ENCODE measurements at regions of chrX and their contacts with region 1.

Region 1: DNA sequence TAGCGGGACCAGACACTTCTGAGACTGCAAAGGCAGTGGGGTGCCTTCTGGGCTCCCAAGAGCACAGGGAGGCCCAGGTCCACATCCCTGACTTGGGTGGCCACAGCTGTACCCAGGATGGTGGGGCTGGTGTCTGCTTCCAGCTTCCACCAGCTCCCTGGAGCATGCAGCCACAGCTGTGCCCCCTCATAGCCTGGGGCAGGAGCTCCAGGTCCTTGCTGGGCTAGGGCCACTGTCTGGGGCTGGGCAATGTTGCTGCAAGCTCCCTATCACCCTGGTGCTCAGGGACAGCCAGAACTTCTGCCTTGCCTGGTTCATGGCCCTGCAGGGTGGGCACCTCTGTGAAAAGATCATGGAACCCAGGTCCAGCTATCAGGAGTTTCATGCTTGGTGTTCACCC is 673.9 kb downstream of the SH3BGRL start:
- DNase-seq: no peak
- H3K4me3 ChIP-seq: no peak overlapping the region
- H3K27ac ChIP-seq: no peak overlapping the region
- H3K4me1 ChIP-seq: no peaks in the 10 kb centered on the region
- H3K27me3 ChIP-seq: no peaks in the 10 kb centered on the region
- CTCF ChIP-seq: no peak
- EP300 ChIP-seq: no peak
- POLR2A ChIP-seq: no peak

Region 2: GRCh38 chrX:82384401-82384800 is 508.6 kb after region 1 on chrX:
- in situ Hi-C with region 1: no loop called
- intact Hi-C with region 1: loop called (anchors 10 kb)
- DNase-seq: no peak
- H3K4me3 ChIP-seq: no peak overlapping the region
- H3K27ac ChIP-seq: no peak overlapping the region
- H3K4me1 ChIP-seq: no peaks in the 10 kb centered on the region
- H3K27me3 ChIP-seq: no peaks in the 10 kb centered on the region
- CTCF ChIP-seq: no peak
- EP300 ChIP-seq: no peak
- POLR2A ChIP-seq: no peak

Measured in transverse colon (tissue), 4 donors.